CD4-positive, alpha-beta memory T cell (primary cell): ENCODE measurements at regions of chr19 and their contacts with region 1.

Region 1: DNA sequence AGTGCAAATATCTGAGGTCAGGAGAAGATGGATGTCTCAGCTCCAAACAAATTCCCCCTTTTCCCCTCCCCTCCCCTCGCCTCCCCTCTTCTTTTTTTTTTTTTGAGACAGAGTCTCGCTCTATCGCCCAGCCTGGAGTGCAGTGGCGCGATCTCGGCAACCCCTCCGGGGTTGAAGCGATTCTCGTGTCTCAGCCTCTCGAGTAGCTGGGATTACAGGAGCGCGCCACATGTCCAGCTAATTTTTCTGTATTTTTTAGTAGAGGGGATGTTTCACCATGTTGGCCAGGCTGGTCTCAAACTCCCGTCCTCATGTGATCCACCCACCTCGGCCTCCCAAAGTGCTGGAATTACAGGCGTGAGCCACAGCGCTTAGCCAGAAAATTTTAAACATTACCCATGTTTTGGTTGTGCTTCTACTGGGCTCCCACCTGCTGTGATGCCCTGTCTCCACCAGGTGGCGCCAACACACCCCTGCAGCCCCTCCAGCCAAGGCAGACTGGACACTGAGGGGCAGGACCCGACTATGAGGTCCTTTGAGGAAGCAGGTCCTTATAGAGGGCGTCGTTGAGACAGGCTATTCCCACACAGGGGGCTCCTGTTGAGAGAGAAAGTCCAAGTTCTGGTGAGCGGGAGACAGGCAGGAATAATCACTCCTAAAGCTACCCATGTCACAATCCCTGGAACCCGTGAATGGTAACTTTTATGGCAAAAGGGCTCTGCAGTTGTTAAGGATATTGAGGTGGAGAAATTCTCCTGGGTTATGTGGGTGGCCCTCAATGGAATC is 6.3 kb downstream of the ERICH4 start:
- DNase-seq: peak; percentile 60 to 72 (median 63)
- H3K4me3 ChIP-seq: peak overlapping the region in 1 of 2 donors; percentile 21
- H3K4me3 Mint-ChIP-seq: peak overlapping the region; percentile 48 to 84 (median 78)
- H3K27ac ChIP-seq: no peak overlapping the region
- H3K27ac Mint-ChIP-seq: peak overlapping the region in 1 of 7 donors; percentile 36
- H3K4me1 ChIP-seq: peaks cover 8% of the 10 kb centered on the region
- H3K4me1 Mint-ChIP-seq: peaks cover 0 to 21% (median 4%) of the 10 kb centered on the region in 4 donors
- H3K27me3 ChIP-seq: no peaks in the 10 kb centered on the region
- H3K27me3 Mint-ChIP-seq: peaks cover 4 to 15% of the 10 kb centered on the region in 2 donors

Region 2: DNA sequence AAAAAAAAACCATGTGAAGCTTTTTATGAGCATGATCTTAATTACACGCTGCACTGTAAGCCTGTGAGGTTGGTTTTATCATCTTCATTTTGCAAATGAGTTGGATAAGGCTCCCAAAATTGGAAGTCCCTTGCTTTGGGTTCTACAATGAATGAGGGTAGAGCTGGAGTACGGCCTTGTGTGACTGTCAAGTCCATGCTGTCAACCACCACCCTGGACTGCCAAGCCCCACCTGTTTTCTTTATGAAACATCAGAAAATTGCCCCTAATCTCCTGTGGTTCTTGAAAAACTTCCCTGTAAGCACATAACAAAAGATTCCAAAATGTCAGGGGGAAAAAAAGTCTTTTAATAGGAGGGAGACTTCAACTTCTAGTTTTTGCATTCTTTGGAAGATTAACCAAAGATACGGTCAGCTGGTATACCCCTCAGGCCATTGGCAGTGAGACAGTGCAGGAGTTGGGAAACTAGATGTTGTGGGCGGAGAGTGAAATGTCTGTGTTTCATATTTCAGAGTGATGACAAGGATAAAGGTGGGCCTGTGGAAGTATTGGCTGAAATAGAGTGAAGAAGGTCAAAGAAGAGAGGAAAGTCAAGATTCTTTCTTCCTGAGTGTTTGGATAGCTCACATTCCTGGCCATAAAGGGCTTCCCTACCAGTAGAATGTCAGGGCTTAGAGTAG is 417.5 kb before region 1 on chr19:
- CTCF ChIA-PET with region 1: no interaction called
- POLR2A ChIA-PET with region 1: no interaction called
- intact Hi-C with region 1: no loop called
- DNase-seq: no peak
- H3K4me3 ChIP-seq: no peak overlapping the region
- H3K4me3 Mint-ChIP-seq: peak overlapping the region in 2 of 8 donors; percentile 4 to 14
- H3K27ac ChIP-seq: no peak overlapping the region
- H3K27ac Mint-ChIP-seq: no peak overlapping the region
- H3K4me1 ChIP-seq: peaks cover 7% of the 10 kb centered on the region
- H3K4me1 Mint-ChIP-seq: peaks cover 6 to 21% (median 11%) of the 10 kb centered on the region in 4 donors
- H3K27me3 ChIP-seq: peaks cover 4% of the 10 kb centered on the region
- H3K27me3 Mint-ChIP-seq: peaks cover 5 to 15% of the 10 kb centered on the region in 2 donors

Region 3: DNA sequence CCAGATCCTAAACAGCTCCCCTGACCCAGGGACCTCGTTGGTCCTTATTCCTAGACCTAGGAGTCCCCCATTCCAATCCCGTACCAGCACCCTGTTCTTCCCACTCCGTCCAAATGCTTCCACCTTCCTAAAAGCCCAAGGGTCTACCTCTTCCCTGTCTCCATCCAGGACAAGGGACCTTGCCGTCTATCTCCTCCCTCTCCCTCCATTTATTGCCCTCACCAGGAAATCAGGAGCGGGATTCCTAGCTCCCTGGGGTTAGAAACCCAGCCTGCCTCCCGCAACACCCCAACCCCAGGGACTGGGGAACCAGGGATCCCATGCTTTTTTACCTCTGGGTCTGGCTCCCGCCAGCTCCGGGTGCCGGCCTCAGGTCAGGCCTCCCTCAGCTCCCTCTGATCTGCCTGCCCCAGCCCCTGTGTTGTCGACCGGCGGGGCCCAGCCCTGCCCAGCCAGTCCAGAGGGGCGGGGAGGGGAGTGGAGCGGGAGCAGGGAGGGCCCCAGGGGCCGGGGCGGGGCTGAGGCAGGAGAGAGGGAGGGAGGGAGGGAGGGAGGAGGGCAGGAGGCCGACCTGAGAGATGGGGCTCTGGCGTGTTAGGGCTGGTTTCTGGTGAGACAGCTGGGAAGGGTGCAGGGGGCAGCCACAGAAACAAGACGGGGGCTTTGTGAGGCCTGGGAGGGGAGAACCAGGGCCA is 22.2 kb before region 1 on chr19 and contains the start of gene B3GNT8:
- CTCF ChIA-PET with region 1: interaction called, 10 read pairs
- POLR2A ChIA-PET with region 1: no interaction called
- intact Hi-C with region 1: no loop called
- DNase-seq: peak; percentile 16 to 52 (median 32)
- H3K4me3 ChIP-seq: peak within 1 kb of the TSS; percentile 33 to 34
- H3K4me3 Mint-ChIP-seq: peak within 1 kb of the TSS; percentile 90 to 98 (median 92)
- H3K27ac ChIP-seq: peak within 1 kb of the TSS; percentile 68
- H3K27ac Mint-ChIP-seq: peak within 1 kb of the TSS; percentile 91 to 98 (median 96)
- H3K4me1 ChIP-seq: peaks cover 39% of the 10 kb centered on the region
- H3K4me1 Mint-ChIP-seq: peaks cover 15 to 51% (median 34%) of the 10 kb centered on the region in 4 donors
- H3K27me3 ChIP-seq: no peaks in the 10 kb centered on the region
- H3K27me3 Mint-ChIP-seq: no peaks in the 10 kb centered on the region
- total RNA-seq, gene B3GNT8: 2.9 to 3.2 TPM

Region 4: GRCh38 chr19:41541990-41542584 is 92.8 kb after region 1 on chr19:
- CTCF ChIA-PET with region 1: interaction called, 51 read pairs
- POLR2A ChIA-PET with region 1: interaction called, 3 read pairs
- intact Hi-C with region 1: loop called (anchors 1 kb)
- DNase-seq: peak; percentile 69 to 80 (median 76)
- H3K4me3 ChIP-seq: no peak overlapping the region
- H3K4me3 Mint-ChIP-seq: peak overlapping the region in 7 of 8 donors; percentile 55 to 86 (median 66)
- H3K27ac ChIP-seq: no peak overlapping the region
- H3K27ac Mint-ChIP-seq: peak overlapping the region; percentile 65 to 92 (median 86)
- H3K4me1 ChIP-seq: peaks cover 51% of the 10 kb centered on the region
- H3K4me1 Mint-ChIP-seq: peaks cover 42 to 48% (median 45%) of the 10 kb centered on the region in 4 donors
- H3K27me3 ChIP-seq: no peaks in the 10 kb centered on the region
- H3K27me3 Mint-ChIP-seq: no peaks in the 10 kb centered on the region

Region 5: GRCh38 chr19:41563854-41564514 is 114.7 kb after region 1 on chr19:
- CTCF ChIA-PET with region 1: interaction called, 158 read pairs
- POLR2A ChIA-PET with region 1: interaction called, 7 read pairs
- intact Hi-C with region 1: loop called (anchors 2 kb)
- DNase-seq: peak in 4 of 5 donors; percentile 58 to 88 (median 66)
- H3K4me3 ChIP-seq: peak overlapping the region in 1 of 2 donors; percentile 36
- H3K4me3 Mint-ChIP-seq: peak overlapping the region; percentile 31 to 85 (median 70)
- H3K27ac ChIP-seq: peak overlapping the region; percentile 28
- H3K27ac Mint-ChIP-seq: peak overlapping the region in 6 of 7 donors; percentile 82 to 94 (median 88)
- H3K4me1 ChIP-seq: peaks cover 75% of the 10 kb centered on the region
- H3K4me1 Mint-ChIP-seq: peaks cover 54 to 91% (median 70%) of the 10 kb centered on the region in 4 donors
- H3K27me3 ChIP-seq: no peaks in the 10 kb centered on the region
- H3K27me3 Mint-ChIP-seq: no peaks in the 10 kb centered on the region

Region 6: GRCh38 chr19:41575998-41576397 is 126.7 kb after region 1 on chr19 and contains the start of gene CEACAM21:
- CTCF ChIA-PET with region 1: interaction called, 158 read pairs
- POLR2A ChIA-PET with region 1: interaction called, 4 read pairs
- intact Hi-C with region 1: no loop called
- DNase-seq: peak in 1 of 5 donors; percentile 59
- H3K4me3 ChIP-seq: peak within 1 kb of the TSS in 1 of 2 donors; percentile 35
- H3K4me3 Mint-ChIP-seq: peak within 1 kb of the TSS; percentile 54 to 83 (median 68)
- H3K27ac ChIP-seq: peak within 1 kb of the TSS; percentile 8
- H3K27ac Mint-ChIP-seq: peak within 1 kb of the TSS; percentile 73 to 91 (median 84)
- H3K4me1 ChIP-seq: peaks cover 22% of the 10 kb centered on the region
- H3K4me1 Mint-ChIP-seq: peaks cover 21 to 36% (median 28%) of the 10 kb centered on the region in 4 donors
- H3K27me3 ChIP-seq: no peaks in the 10 kb centered on the region
- H3K27me3 Mint-ChIP-seq: no peaks in the 10 kb centered on the region
- total RNA-seq, gene CEACAM21: 42.8 to 48.7 TPM

Region 7: GRCh38 chr19:41784743-41785142 is 335.5 kb after region 1 on chr19:
- CTCF ChIA-PET with region 1: no interaction called
- POLR2A ChIA-PET with region 1: no interaction called
- intact Hi-C with region 1: no loop called
- DNase-seq: no peak
- H3K4me3 ChIP-seq: no peak overlapping the region
- H3K4me3 Mint-ChIP-seq: peak overlapping the region in 4 of 8 donors; percentile 5 to 57 (median 36)
- H3K27ac ChIP-seq: no peak overlapping the region
- H3K27ac Mint-ChIP-seq: peak overlapping the region in 1 of 7 donors; percentile 45
- H3K4me1 ChIP-seq: peaks cover 13% of the 10 kb centered on the region
- H3K4me1 Mint-ChIP-seq: peaks cover 15 to 17% (median 16%) of the 10 kb centered on the region in 4 donors
- H3K27me3 ChIP-seq: peaks cover 11% of the 10 kb centered on the region
- H3K27me3 Mint-ChIP-seq: peaks cover 37 to 50% of the 10 kb centered on the region in 2 donors